Endothelial cell of umbilical vein (primary cell): ENCODE measurements at regions of chr2 and their contacts with region 1.

Region 1: GRCh38 chr2:72150157-72150865 is 2.6 kb upstream of the CYP26B1 start:
- DNase-seq: peak; percentile 77
- H3K4me3 ChIP-seq: no peak overlapping the region
- H3K27ac ChIP-seq: no peak overlapping the region
- H3K4me1 ChIP-seq: peaks cover 15% of the 10 kb centered on the region
- H3K27me3 ChIP-seq: peaks cover 33 to 48% of the 10 kb centered on the region in 2 experiments
- CTCF ChIP-seq: peak; percentile 66 to 85
- POLR2A ChIP-seq: no peak

Region 2: GRCh38 chr2:71545572-71546274 is 604.6 kb before region 1 on chr2:
- CTCF ChIA-PET with region 1: interaction called, 20 read pairs
- POLR2A ChIA-PET with region 1: no interaction called
- dilution Hi-C with region 1: no loop called
- intact Hi-C with region 1: loop called (anchors 1 kb)
- DNase-seq: peak; percentile 74
- H3K4me3 ChIP-seq: peak overlapping the region in 1 of 3 experiments; percentile 7
- H3K27ac ChIP-seq: no peak overlapping the region
- H3K4me1 ChIP-seq: peaks cover 11% of the 10 kb centered on the region
- H3K27me3 ChIP-seq: no peaks in the 10 kb centered on the region
- CTCF ChIP-seq: peak; percentile 64 to 72
- POLR2A ChIP-seq: no peak

Region 3: GRCh38 chr2:71609958-71610357 is 540.4 kb before region 1 on chr2:
- CTCF ChIA-PET with region 1: interaction called, 6 read pairs
- POLR2A ChIA-PET with region 1: no interaction called
- dilution Hi-C with region 1: no loop called
- intact Hi-C with region 1: loop called (anchors 5 kb)
- DNase-seq: peak; percentile 42
- H3K4me3 ChIP-seq: no peak overlapping the region
- H3K27ac ChIP-seq: peak overlapping the region; percentile 59
- H3K4me1 ChIP-seq: peaks cover 32% of the 10 kb centered on the region
- H3K27me3 ChIP-seq: no peaks in the 10 kb centered on the region
- CTCF ChIP-seq: peak in 1 of 2 donors; percentile 27
- POLR2A ChIP-seq: no peak

Region 4: GRCh38 chr2:72115552-72116546 is 34.5 kb before region 1 on chr2:
- CTCF ChIA-PET with region 1: interaction called, 13 read pairs
- POLR2A ChIA-PET with region 1: no interaction called
- dilution Hi-C with region 1: no loop called
- intact Hi-C with region 1: no loop called
- DNase-seq: peak; percentile 86
- H3K4me3 ChIP-seq: no peak overlapping the region
- H3K27ac ChIP-seq: peak overlapping the region; percentile 38
- H3K4me1 ChIP-seq: peaks cover 11% of the 10 kb centered on the region
- H3K27me3 ChIP-seq: no peaks in the 10 kb centered on the region
- CTCF ChIP-seq: peak; percentile 34 to 45
- POLR2A ChIP-seq: no peak